Naive thymus-derived CD4-positive, alpha-beta T cell (primary cell): ENCODE measurements at regions of chr1 and their contacts with region 1.

Region 1: GRCh38 chr1:26853156-26853555 is 9.8 kb upstream of the SFN start:
- DNase-seq: peak; percentile 64 to 85 (median 74)
- ATAC-seq: peak; percentile 89
- H3K4me3 ChIP-seq: no peak overlapping the region
- H3K4me3 Mint-ChIP-seq: no peak overlapping the region
- H3K27ac ChIP-seq: no peak overlapping the region
- H3K27ac Mint-ChIP-seq: peak overlapping the region in 1 of 9 donors; percentile 20
- H3K4me1 ChIP-seq: no peaks in the 10 kb centered on the region
- H3K4me1 Mint-ChIP-seq: peaks cover 0 to 16% (median 0%) of the 10 kb centered on the region in 7 donors
- H3K27me3 ChIP-seq: no peaks in the 10 kb centered on the region
- H3K27me3 Mint-ChIP-seq: no peaks in the 10 kb centered on the region

Region 2: GRCh38 chr1:25997828-25998761 is 855.1 kb before region 1 on chr1 and contains the start of gene PAFAH2:
- CTCF ChIA-PET with region 1: no interaction called
- POLR2A ChIA-PET with region 1: no interaction called
- intact Hi-C with region 1: no loop called
- DNase-seq: peak; percentile 83 to 99 (median 98)
- ATAC-seq: peak; percentile 98
- H3K4me3 ChIP-seq: peak within 1 kb of the TSS; percentile 76
- H3K4me3 Mint-ChIP-seq: peak within 1 kb of the TSS; percentile 91 to 99 (median 96)
- H3K27ac ChIP-seq: peak within 1 kb of the TSS; percentile 89
- H3K27ac Mint-ChIP-seq: peak within 1 kb of the TSS; percentile 96 to 99 (median 99)
- H3K4me1 ChIP-seq: peaks cover 8 to 18% of the 10 kb centered on the region in 2 donors
- H3K4me1 Mint-ChIP-seq: peaks cover 19 to 50% (median 40%) of the 10 kb centered on the region in 7 donors
- H3K27me3 ChIP-seq: no peaks in the 10 kb centered on the region
- H3K27me3 Mint-ChIP-seq: no peaks in the 10 kb centered on the region
- total RNA-seq, gene PAFAH2: 11.4 to 36.0 (median 12.7) TPM

Region 3: DNA sequence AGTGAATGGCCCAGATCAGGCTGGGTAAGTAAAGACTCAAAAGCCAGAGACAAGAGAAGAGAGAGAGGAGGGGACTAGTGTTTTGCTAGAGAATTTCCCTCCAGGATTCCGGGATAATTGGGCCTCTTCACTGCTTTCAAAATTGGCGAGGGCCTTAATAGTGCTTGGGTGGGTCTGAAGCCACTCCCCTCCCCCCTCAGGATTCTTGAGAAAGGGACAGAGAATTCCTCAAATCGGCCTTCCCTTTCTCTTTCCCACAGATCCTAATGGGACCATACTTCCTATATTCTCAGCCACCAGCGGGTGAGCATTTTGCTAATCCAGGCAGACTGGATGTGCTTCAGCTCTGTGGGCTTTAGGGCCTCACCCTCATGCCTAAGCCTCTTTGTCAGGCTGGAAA is 21.7 kb after region 1 on chr1:
- CTCF ChIA-PET with region 1: interaction called, 7 read pairs
- POLR2A ChIA-PET with region 1: no interaction called
- intact Hi-C with region 1: loop called (anchors 1 kb)
- DNase-seq: no peak
- ATAC-seq: no peak
- H3K4me3 ChIP-seq: no peak overlapping the region
- H3K4me3 Mint-ChIP-seq: no peak overlapping the region
- H3K27ac ChIP-seq: no peak overlapping the region
- H3K27ac Mint-ChIP-seq: no peak overlapping the region
- H3K4me1 ChIP-seq: no peaks in the 10 kb centered on the region
- H3K4me1 Mint-ChIP-seq: peaks cover 0 to 3% (median 0%) of the 10 kb centered on the region in 7 donors
- H3K27me3 ChIP-seq: no peaks in the 10 kb centered on the region
- H3K27me3 Mint-ChIP-seq: no peaks in the 10 kb centered on the region